CD8-positive, alpha-beta T cell (primary cell): ENCODE measurements at regions of chr17 and their contacts with region 1.

Region 1: GRCh38 chr17:29219378-29220047 is 27.1 kb upstream of the CRYBA1 start:
- DNase-seq: peak; percentile 35 to 81 (median 75)
- ATAC-seq: peak; percentile 86
- H3K4me3 ChIP-seq: no peak overlapping the region
- H3K4me3 Mint-ChIP-seq: no peak overlapping the region
- H3K27ac ChIP-seq: no peak overlapping the region
- H3K27ac Mint-ChIP-seq: no peak overlapping the region
- H3K4me1 ChIP-seq: no peaks in the 10 kb centered on the region
- H3K4me1 Mint-ChIP-seq: peaks cover 5% of the 10 kb centered on the region
- H3K27me3 ChIP-seq: no peaks in the 10 kb centered on the region
- H3K27me3 Mint-ChIP-seq: no peaks in the 10 kb centered on the region
- CTCF ChIP-seq: peak; percentile 78

Region 2: DNA sequence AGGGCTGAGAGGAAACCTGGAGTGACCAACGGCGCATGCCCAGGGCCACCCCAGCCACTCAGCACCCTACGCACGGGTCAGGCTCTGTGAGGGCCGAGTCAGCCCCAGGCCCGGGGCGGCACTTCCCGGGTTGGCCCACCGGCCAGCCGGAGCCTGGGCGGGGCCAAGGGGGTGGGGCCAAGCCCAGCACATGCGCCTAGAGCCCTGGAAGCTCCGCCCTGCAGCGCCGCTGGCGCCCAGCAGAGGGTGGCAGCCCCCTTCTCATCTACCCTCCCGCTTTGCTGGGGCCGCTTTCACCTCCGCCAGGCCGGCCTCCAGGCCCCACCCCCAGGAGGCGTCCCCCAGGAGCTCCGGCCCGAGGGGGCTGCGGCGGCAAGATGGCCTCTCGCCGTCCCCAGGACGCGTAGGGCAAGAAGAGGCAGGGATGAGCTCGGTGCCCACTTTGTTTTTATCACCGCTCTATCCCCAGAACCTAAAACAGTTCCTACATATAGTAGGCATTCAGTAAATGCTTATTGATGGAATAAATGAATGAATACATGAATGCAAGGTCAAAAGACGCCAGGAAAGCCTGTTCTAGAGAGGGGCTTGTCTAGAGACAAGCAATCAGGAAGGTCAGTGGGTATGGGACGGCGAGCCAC is 70.6 kb before region 1 on chr17:
- CTCF ChIA-PET with region 1: interaction called, 199 read pairs
- POLR2A ChIA-PET with region 1: interaction called, 4 read pairs
- intact Hi-C with region 1: loop called in 1 of 2 experiments (anchors 1 kb)
- DNase-seq: peak; percentile 82 to 95 (median 91)
- ATAC-seq: peak; percentile 97
- H3K4me3 ChIP-seq: peak overlapping the region; percentile 54 to 56
- H3K4me3 Mint-ChIP-seq: peak overlapping the region; percentile 76
- H3K27ac ChIP-seq: peak overlapping the region in 1 of 2 experiments; percentile 88
- H3K27ac Mint-ChIP-seq: peak overlapping the region; percentile 87
- H3K4me1 ChIP-seq: peaks cover 23% of the 10 kb centered on the region
- H3K4me1 Mint-ChIP-seq: peaks cover 33% of the 10 kb centered on the region
- H3K27me3 ChIP-seq: no peaks in the 10 kb centered on the region
- H3K27me3 Mint-ChIP-seq: no peaks in the 10 kb centered on the region
- CTCF ChIP-seq: peak; percentile 98

Region 3: GRCh38 chr17:29155227-29155965 is 64.1 kb before region 1 on chr17:
- CTCF ChIA-PET with region 1: interaction called, 199 read pairs
- POLR2A ChIA-PET with region 1: no interaction called
- intact Hi-C with region 1: no loop called
- DNase-seq: peak in 8 of 9 experiments; percentile 33 to 65 (median 49)
- ATAC-seq: peak; percentile 92
- H3K4me3 ChIP-seq: no peak overlapping the region
- H3K4me3 Mint-ChIP-seq: peak overlapping the region; percentile 47
- H3K27ac ChIP-seq: no peak overlapping the region
- H3K27ac Mint-ChIP-seq: peak overlapping the region; percentile 64
- H3K4me1 ChIP-seq: peaks cover 15% of the 10 kb centered on the region
- H3K4me1 Mint-ChIP-seq: peaks cover 26% of the 10 kb centered on the region
- H3K27me3 ChIP-seq: no peaks in the 10 kb centered on the region
- H3K27me3 Mint-ChIP-seq: no peaks in the 10 kb centered on the region
- CTCF ChIP-seq: no peak

Region 4: DNA sequence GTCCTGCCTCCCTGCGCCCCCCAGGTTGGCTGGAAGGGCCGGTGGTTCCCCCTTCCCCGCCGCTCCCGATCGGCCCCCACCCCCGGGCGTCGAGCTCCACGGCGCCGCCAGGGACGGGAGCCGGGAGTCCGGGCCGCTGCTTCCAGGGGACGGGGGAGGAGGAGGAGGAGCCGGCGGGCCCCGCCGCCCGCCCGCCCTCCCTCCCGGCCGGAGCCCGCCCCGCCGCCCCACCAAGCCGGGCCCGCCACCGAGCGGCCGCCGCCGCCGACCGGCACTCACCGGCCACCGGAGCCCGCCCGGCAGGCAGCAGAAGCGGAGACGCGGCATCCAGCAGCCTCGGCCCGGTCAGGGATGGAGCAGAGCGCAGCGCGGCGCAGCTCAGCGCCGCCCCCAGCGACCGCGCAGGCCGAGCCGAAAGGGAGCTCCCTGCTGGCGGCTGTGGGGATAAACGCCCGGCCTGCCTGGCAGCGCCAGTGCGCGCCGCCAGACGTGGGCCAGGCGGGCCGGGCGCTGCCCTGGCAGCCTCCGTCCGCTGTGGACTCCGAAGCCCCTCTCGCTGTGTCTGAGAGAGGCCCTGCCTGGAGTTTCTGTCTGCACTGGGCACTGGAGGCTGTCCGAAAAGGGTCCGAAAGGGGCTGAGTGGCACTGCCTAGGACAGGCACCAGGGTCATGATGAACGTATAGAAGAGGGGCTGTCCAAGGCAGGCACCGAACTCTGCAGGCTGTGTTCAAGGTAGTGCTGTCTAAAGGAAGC is 39.3 kb before region 1 on chr17 and contains the start of gene MYO18A:
- CTCF ChIA-PET with region 1: interaction called, 10 read pairs
- POLR2A ChIA-PET with region 1: no interaction called
- intact Hi-C with region 1: no loop called
- DNase-seq: peak; percentile 64 to 89 (median 78)
- ATAC-seq: peak; percentile 94
- H3K4me3 ChIP-seq: peak within 1 kb of the TSS; percentile 20 to 26
- H3K4me3 Mint-ChIP-seq: peak within 1 kb of the TSS; percentile 68
- H3K27ac ChIP-seq: peak within 1 kb of the TSS in 1 of 2 experiments; percentile 5
- H3K27ac Mint-ChIP-seq: no peak within 1 kb of the TSS
- H3K4me1 ChIP-seq: peaks cover 22% of the 10 kb centered on the region
- H3K4me1 Mint-ChIP-seq: peaks cover 20% of the 10 kb centered on the region
- H3K27me3 ChIP-seq: no peaks in the 10 kb centered on the region
- H3K27me3 Mint-ChIP-seq: no peaks in the 10 kb centered on the region
- CTCF ChIP-seq: peak; percentile 86
- total RNA-seq, gene MYO18A: 48.5 to 52.9 TPM

Region 5: DNA sequence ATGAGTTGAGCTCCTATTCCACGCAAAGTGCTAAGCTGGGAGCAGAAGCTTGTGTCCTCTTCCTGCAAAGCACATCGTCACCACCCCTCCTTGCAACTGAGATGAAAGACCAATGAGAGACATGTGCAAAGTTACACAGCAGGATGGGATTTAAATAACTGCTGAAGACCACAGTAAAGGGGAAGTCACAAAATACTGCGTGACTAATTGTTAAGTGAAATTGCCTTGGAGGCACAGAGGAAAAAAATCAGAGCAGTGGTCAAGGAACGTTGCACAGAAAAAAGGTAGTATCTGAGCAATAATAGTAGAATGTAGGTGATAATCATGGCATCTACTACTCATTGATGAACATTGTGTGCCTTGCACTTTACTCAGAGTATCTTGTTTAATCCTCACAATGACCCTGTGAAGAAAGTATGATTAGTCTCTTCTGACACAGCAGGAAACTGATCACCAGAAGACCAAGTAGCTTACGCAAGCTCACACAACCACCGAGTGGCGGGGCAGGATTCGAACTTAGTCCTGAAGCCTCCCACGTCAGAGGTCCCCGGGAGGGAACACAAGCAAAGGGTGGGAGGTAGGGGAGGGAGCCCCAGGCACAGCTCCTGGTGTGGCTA is 23.9 kb before region 1 on chr17:
- CTCF ChIA-PET with region 1: interaction called, 14 read pairs
- POLR2A ChIA-PET with region 1: no interaction called
- intact Hi-C with region 1: no loop called
- DNase-seq: peak in 1 of 9 experiments; percentile 21
- ATAC-seq: no peak
- H3K4me3 ChIP-seq: no peak overlapping the region
- H3K4me3 Mint-ChIP-seq: no peak overlapping the region
- H3K27ac ChIP-seq: no peak overlapping the region
- H3K27ac Mint-ChIP-seq: no peak overlapping the region
- H3K4me1 ChIP-seq: peaks cover 4% of the 10 kb centered on the region
- H3K4me1 Mint-ChIP-seq: peaks cover 4% of the 10 kb centered on the region
- H3K27me3 ChIP-seq: no peaks in the 10 kb centered on the region
- H3K27me3 Mint-ChIP-seq: peaks cover 12% of the 10 kb centered on the region
- CTCF ChIP-seq: no peak

Region 6: DNA sequence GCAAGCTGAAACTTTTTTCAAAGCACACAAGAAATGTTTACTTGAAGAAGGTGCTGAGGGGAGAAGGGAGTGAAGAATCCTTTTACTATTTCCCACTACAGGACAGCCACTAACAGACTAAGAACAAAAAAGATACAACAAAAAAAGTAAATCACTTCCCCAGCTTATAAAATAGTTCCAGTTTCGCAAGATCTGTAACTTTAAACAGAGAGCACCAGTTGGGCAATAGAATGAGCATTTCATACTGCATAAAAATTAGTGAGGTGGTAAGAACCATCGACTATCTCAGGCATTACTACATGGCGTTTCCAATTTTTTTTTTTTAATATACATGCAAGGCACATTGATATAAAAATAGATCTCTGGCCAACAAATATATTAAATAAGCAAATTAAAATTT is 38.2 kb after region 1 on chr17:
- CTCF ChIA-PET with region 1: no interaction called
- POLR2A ChIA-PET with region 1: no interaction called
- intact Hi-C with region 1: loop called in 1 of 2 experiments (anchors 1 kb)
- DNase-seq: no peak
- ATAC-seq: no peak
- H3K4me3 ChIP-seq: no peak overlapping the region
- H3K4me3 Mint-ChIP-seq: no peak overlapping the region
- H3K27ac ChIP-seq: no peak overlapping the region
- H3K27ac Mint-ChIP-seq: peak overlapping the region; percentile 66
- H3K4me1 ChIP-seq: no peaks in the 10 kb centered on the region
- H3K4me1 Mint-ChIP-seq: peaks cover 32% of the 10 kb centered on the region
- H3K27me3 ChIP-seq: no peaks in the 10 kb centered on the region
- H3K27me3 Mint-ChIP-seq: no peaks in the 10 kb centered on the region
- CTCF ChIP-seq: no peak